ENCODE measurements at regions of chr4 and their contacts with region 1.

Region 1: GRCh38 chr4:83012687-83013419 is 2.2 kb upstream of the LIN54 start:
- DNase-seq: peak; percentile 99
- H3K4me3 ChIP-seq: peak overlapping the region; percentile 97
- H3K27ac ChIP-seq: peak overlapping the region; percentile 92
- H3K4me1 ChIP-seq: peaks cover 23% of the 10 kb centered on the region
- CTCF ChIP-seq: peak; percentile 47

Region 2: DNA sequence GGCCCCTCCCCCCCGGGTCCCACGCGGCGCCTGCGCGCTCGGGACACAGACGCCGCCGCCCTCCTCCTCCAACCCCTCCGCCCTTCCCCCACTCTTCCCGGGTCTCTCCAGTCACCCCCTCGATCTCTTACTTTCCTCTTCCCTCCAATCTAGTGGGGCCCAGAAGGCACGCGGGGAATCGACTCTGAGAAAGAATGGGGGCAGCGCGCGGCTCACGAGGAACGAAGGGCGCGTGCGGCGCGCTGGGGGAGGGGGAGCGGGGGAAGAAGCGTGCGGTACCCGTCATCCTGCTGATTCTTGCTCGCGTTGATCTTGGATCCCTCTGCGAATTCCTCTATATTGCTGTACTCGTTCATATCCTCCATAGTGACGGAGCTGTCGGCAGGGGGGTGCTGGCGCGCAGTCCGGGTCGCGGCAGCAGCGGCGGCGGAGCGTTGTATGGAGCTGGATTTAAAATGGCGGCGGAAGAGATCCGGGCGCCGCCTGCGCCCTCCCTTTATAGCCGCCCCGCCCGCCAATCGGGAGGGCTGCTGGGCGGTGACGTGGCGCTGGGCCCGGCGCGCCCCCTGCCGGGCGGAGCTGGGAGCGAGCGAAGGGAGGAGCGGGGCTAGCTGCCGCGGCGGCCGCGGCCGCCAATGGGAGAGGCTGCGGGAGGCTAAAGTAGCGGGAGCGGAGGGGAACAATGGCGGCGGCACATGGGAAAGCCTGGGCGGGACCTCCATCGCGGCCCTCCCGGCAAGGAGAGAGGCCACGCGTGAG is 583.7 kb before region 1 on chr4:
- CTCF ChIA-PET with region 1: no interaction called
- POLR2A ChIA-PET with region 1: no interaction called
- intact Hi-C with region 1: loop called (anchors 1 kb)
- DNase-seq: peak; percentile 92
- H3K4me3 ChIP-seq: peak overlapping the region; percentile 99
- H3K27ac ChIP-seq: peak overlapping the region; percentile 90
- H3K4me1 ChIP-seq: peaks cover 53% of the 10 kb centered on the region
- CTCF ChIP-seq: peak; percentile 84

Region 3: GRCh38 chr4:82753725-82754410 is 259.0 kb before region 1 on chr4:
- CTCF ChIA-PET with region 1: no interaction called
- POLR2A ChIA-PET with region 1: no interaction called
- intact Hi-C with region 1: no loop called
- DNase-seq: no peak
- H3K4me3 ChIP-seq: no peak overlapping the region
- H3K27ac ChIP-seq: no peak overlapping the region
- H3K4me1 ChIP-seq: no peaks in the 10 kb centered on the region
- CTCF ChIP-seq: no peak

Region 4: DNA sequence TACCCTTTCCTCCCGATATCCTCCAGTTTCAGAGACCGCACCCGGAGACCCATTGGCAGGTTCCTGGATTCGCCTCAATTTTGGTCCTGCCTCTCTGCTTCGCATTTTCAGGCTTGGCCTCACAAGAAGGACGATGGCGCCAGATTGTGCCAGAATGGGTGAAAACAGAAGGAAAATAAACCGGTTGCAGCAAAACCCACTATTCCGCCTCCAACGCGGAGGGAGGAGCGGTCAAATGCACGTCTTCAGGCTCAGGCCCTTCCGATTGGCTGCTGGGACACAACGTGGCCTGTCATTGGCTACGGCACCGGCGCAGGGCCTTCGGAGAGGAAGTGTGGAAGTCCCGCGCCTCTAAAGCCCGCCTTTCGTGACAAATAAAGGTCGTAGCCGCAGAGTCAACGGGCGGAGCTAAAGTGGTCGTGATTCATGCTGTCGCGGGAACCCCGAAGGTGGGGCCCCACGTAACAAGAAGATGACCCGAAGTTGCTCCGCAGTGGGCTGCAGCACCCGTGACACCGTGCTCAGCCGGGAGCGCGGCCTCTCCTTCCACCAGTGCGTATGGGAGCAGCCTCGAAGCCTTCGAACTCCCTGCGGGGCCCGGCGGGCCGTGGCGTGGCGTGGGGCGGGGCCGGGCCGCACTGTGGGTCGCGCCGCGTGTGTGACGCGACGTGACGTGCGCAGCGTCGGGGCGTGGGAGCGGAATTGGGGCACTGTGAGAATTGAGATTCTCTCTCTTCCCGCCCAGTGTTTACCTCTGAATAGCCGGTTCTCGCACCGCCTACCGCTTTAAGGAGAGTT is 112.3 kb before region 1 on chr4 and contains the start of gene THAP9:
- CTCF ChIA-PET with region 1: interaction called, 3 read pairs
- POLR2A ChIA-PET with region 1: interaction called, 41 read pairs
- intact Hi-C with region 1: loop called (anchors 1 kb)
- DNase-seq: peak; percentile 99
- H3K4me3 ChIP-seq: peak within 1 kb of the TSS; percentile 85
- H3K27ac ChIP-seq: peak within 1 kb of the TSS; percentile 87
- H3K4me1 ChIP-seq: peaks cover 42% of the 10 kb centered on the region
- CTCF ChIP-seq: no peak
- total RNA-seq, gene THAP9: 13.2 and 16.4 TPM in 2 replicates

Region 5: DNA sequence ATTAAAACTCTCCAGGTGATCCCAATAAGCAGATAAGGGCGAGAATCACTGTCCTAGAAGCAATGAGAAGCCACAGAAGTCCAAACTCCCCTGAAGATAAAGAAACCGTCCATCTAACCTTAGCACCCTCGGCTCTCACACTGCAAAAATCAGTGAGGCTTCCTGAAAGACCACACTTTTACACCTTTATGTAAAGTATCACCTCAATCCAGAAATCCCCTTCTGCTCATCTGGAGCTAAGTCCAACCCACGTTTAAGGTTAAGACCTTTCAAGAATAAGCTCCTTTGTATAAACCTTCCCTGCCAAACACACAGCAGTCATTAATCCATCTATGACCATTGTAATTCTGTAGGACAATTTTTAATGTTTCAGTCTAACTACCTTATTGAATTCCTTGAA is 43.9 kb before region 1 on chr4:
- CTCF ChIA-PET with region 1: no interaction called
- POLR2A ChIA-PET with region 1: interaction called, 52 read pairs
- intact Hi-C with region 1: loop called (anchors 1 kb)
- DNase-seq: peak; percentile 70
- H3K4me3 ChIP-seq: peak overlapping the region; percentile 51
- H3K27ac ChIP-seq: peak overlapping the region; percentile 98
- H3K4me1 ChIP-seq: peaks cover 72% of the 10 kb centered on the region
- CTCF ChIP-seq: no peak

Region 6: DNA sequence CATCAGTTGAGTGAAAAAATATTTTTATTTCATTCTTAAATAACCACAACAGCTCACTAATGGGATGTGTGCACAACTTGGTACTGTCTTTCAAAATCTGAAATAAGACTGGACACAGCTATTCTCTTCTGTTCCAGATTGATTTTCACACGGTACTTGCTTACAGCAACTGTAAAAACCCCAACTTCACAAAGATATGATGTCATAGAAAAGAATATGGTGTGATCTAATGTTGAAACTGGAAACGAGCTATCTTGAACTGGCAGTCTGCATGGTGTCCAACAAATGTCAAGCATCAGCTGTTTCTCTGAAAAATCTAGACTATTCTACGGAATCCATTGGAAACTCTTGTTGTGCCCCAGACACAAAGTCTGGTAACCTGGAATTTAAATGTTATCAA is 428.0 kb after region 1 on chr4:
- CTCF ChIA-PET with region 1: no interaction called
- POLR2A ChIA-PET with region 1: no interaction called
- intact Hi-C with region 1: loop called (anchors 5 kb)
- DNase-seq: no peak
- H3K4me3 ChIP-seq: peak overlapping the region; percentile 29
- H3K27ac ChIP-seq: peak overlapping the region; percentile 94
- H3K4me1 ChIP-seq: peaks cover 55% of the 10 kb centered on the region
- CTCF ChIP-seq: no peak